SK-N-SH (cell line): ENCODE measurements at regions of chr3 and their contacts with region 1.

Region 1: GRCh38 chr3:127426444-127427153 is 138.8 kb upstream of the PRR20G start:
- DNase-seq: no peak
- H3K4me3 ChIP-seq: no peak overlapping the region
- H3K27ac ChIP-seq: no peak overlapping the region
- H3K4me1 ChIP-seq: peaks cover 0 to 6% of the 10 kb centered on the region in 2 experiments; a peak in 2 of 4 replicates
- H3K27me3 ChIP-seq: peaks cover 8% of the 10 kb centered on the region; the same call in 1 of the 2 replicates
- CTCF ChIP-seq: no peak
- EP300 ChIP-seq: no peak
- RAD21 ChIP-seq: no peak

Region 2: GRCh38 chr3:127406309-127407025 is 20.1 kb before region 1 on chr3:
- CTCF ChIA-PET with region 1: interaction called, 10 read pairs
- POLR2A ChIA-PET with region 1: no interaction called
- DNase-seq: peak; percentile 41
- H3K4me3 ChIP-seq: no peak overlapping the region
- H3K27ac ChIP-seq: no peak overlapping the region
- H3K4me1 ChIP-seq: peaks cover 0 to 17% of the 10 kb centered on the region in 2 experiments; a peak in 1 of 4 replicates
- H3K27me3 ChIP-seq: no peaks in the 10 kb centered on the region
- CTCF ChIP-seq: peak; percentile 42
- EP300 ChIP-seq: no peak
- RAD21 ChIP-seq: no peak